GM12878 (cell line): ENCODE measurements at regions of chr18 and their contacts with region 1.

Region 1: DNA sequence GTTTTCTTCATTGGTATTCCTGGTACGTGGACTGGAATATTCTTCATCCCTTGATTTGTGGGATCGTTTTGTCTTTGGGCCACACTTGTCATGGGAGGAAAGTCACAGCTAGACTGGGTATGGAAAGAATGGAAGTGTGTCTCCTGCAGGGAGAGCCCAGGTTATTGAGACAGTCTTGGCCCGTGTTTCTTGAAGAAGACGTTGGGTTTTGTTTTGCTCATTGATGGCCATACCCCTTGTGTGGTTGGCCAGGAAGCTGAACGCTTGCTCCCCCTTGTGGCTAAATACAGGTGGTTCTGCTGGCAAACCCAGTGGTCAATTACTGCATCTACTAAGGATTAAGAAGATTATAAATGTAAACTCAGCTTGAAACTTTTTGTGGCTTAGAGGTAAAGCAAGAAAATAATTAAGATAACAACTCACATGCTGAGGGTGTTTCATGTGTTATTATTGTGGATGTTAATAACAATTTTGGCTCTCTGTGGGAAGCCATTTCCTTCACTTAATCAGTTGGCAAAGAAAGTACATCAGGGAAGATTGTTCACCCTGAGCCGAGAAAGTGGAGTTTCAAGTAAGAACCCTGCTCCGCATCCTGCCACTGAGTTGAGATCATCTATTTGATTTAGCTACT is 91.8 kb downstream of the NEDD4L start:
- DNase-seq: peak; percentile 45
- ATAC-seq: peak; percentile 96
- H3K4me3 ChIP-seq: no peak overlapping the region
- H3K27ac ChIP-seq: no peak overlapping the region
- H3K4me1 ChIP-seq: no peaks in the 10 kb centered on the region
- H3K27me3 ChIP-seq: no peaks in the 10 kb centered on the region
- CTCF ChIP-seq: peak; percentile 79 to 92 (median 91)
- EP300 ChIP-seq: no peak
- POLR2A ChIP-seq: no peak
- RAD21 ChIP-seq: peak; percentile 75

Region 2: DNA sequence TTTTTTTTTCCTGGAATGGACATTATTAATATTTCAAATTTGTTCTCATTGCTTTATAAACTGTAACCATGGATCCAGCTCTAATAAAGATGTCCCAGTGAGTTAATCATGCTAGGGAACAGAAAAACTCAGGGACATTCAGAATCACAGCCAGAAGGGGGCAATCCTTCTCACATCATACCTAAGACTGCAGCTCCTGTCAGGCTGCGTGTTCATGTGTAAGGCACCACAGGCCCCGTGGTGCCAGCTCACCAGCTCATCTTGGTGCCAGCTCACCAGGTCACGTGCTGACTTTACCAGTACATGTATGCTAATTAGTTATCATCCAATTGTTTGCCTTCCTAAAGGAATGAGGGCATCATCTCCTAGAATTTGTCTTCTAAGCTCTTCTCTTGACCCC is 176.5 kb before region 1 on chr18:
- CTCF ChIA-PET with region 1: interaction called, 24 read pairs
- POLR2A ChIA-PET with region 1: no interaction called
- RAD21 ChIA-PET with region 1: interaction called, 7 read pairs
- SMC1A ChIA-PET with region 1: interaction called, 12 read pairs
- in situ Hi-C with region 1: no loop called
- intact Hi-C with region 1: no loop called
- DNase-seq: no peak
- ATAC-seq: peak; percentile 86
- H3K4me3 ChIP-seq: no peak overlapping the region
- H3K27ac ChIP-seq: no peak overlapping the region
- H3K4me1 ChIP-seq: no peaks in the 10 kb centered on the region
- H3K27me3 ChIP-seq: 0 out of 4 replicates have a peak, but pooled peaks cover 0 to 2% of the 10 kb centered on the region in 2 experiments
- CTCF ChIP-seq: peak; percentile 45 to 54 (median 49); a peak in 5 of 6 replicates
- EP300 ChIP-seq: no peak
- POLR2A ChIP-seq: no peak
- RAD21 ChIP-seq: 0 out of 2 replicates have a peak, but pooled peaks have one; percentile 27

Region 3: GRCh38 chr18:58064406-58064998 is 71.3 kb before region 1 on chr18:
- CTCF ChIA-PET with region 1: interaction called, 10 read pairs
- POLR2A ChIA-PET with region 1: no interaction called
- RAD21 ChIA-PET with region 1: no interaction called
- SMC1A ChIA-PET with region 1: interaction called, 3 read pairs
- in situ Hi-C with region 1: no loop called
- intact Hi-C with region 1: no loop called
- DNase-seq: no peak
- ATAC-seq: no peak
- H3K4me3 ChIP-seq: no peak overlapping the region
- H3K27ac ChIP-seq: no peak overlapping the region
- H3K4me1 ChIP-seq: no peaks in the 10 kb centered on the region
- H3K27me3 ChIP-seq: no peaks in the 10 kb centered on the region
- CTCF ChIP-seq: no peak
- EP300 ChIP-seq: no peak
- POLR2A ChIP-seq: no peak
- RAD21 ChIP-seq: no peak

Region 4: DNA sequence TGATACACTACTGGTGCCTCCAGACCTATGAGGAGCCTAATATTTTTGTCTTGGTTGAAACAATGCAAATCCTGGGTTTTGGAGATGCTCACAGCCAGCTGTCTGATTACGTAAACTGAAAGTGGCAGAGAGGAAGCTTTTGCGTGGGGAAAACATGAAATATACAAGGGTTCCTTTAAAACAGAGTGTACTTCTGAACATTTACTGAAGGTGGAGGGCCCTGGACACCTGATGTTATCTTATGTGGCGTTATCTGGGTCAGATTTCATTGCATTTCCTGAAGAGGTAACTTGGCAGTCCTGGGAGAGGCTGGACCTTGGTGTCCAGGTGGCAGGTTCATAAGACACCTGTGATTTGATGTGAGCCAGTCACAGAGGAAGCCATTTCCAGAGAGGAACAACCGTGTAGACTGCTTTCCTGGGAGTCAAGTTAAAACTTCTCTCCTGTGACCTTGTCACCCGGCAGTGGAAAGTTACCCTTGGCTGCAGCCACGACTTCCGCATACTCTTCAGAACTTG is 13.2 kb after region 1 on chr18:
- CTCF ChIA-PET with region 1: interaction called, 34 read pairs
- POLR2A ChIA-PET with region 1: interaction called, 8 read pairs
- RAD21 ChIA-PET with region 1: interaction called, 5 read pairs
- SMC1A ChIA-PET with region 1: interaction called, 13 read pairs
- in situ Hi-C with region 1: no loop called
- intact Hi-C with region 1: no loop called
- DNase-seq: peak; percentile 24
- ATAC-seq: peak; percentile 82
- H3K4me3 ChIP-seq: no peak overlapping the region
- H3K27ac ChIP-seq: no peak overlapping the region
- H3K4me1 ChIP-seq: 0 out of 2 replicates have a peak, but pooled peaks cover 3% of the 10 kb centered on the region
- H3K27me3 ChIP-seq: no peaks in the 10 kb centered on the region
- CTCF ChIP-seq: no peak
- EP300 ChIP-seq: no peak
- POLR2A ChIP-seq: no peak
- RAD21 ChIP-seq: no peak

Region 5: GRCh38 chr18:58195278-58195765 is 59.5 kb after region 1 on chr18:
- CTCF ChIA-PET with region 1: interaction called, 10 read pairs
- POLR2A ChIA-PET with region 1: no interaction called
- RAD21 ChIA-PET with region 1: no interaction called
- SMC1A ChIA-PET with region 1: interaction called, 3 read pairs
- in situ Hi-C with region 1: no loop called
- intact Hi-C with region 1: no loop called
- DNase-seq: no peak
- ATAC-seq: peak; percentile 83
- H3K4me3 ChIP-seq: peak overlapping the region; percentile 64
- H3K27ac ChIP-seq: no peak overlapping the region
- H3K4me1 ChIP-seq: no peaks in the 10 kb centered on the region
- H3K27me3 ChIP-seq: no peaks in the 10 kb centered on the region
- CTCF ChIP-seq: no peak
- EP300 ChIP-seq: no peak
- POLR2A ChIP-seq: no peak
- RAD21 ChIP-seq: no peak

Region 6: GRCh38 chr18:58402247-58402646 is 266.4 kb after region 1 on chr18:
- CTCF ChIA-PET with region 1: no interaction called
- POLR2A ChIA-PET with region 1: no interaction called
- RAD21 ChIA-PET with region 1: no interaction called
- SMC1A ChIA-PET with region 1: no interaction called
- in situ Hi-C with region 1: no loop called
- intact Hi-C with region 1: no loop called
- DNase-seq: no peak
- ATAC-seq: no peak
- H3K4me3 ChIP-seq: no peak overlapping the region
- H3K27ac ChIP-seq: no peak overlapping the region
- H3K4me1 ChIP-seq: peaks cover 11% of the 10 kb centered on the region; the same call in 1 of the 2 replicates
- H3K27me3 ChIP-seq: no peaks in the 10 kb centered on the region
- CTCF ChIP-seq: no peak
- EP300 ChIP-seq: no peak
- POLR2A ChIP-seq: no peak
- RAD21 ChIP-seq: no peak